ENCODE measurements at regions of chr11 and their contacts with region 1.

Region 1: DNA sequence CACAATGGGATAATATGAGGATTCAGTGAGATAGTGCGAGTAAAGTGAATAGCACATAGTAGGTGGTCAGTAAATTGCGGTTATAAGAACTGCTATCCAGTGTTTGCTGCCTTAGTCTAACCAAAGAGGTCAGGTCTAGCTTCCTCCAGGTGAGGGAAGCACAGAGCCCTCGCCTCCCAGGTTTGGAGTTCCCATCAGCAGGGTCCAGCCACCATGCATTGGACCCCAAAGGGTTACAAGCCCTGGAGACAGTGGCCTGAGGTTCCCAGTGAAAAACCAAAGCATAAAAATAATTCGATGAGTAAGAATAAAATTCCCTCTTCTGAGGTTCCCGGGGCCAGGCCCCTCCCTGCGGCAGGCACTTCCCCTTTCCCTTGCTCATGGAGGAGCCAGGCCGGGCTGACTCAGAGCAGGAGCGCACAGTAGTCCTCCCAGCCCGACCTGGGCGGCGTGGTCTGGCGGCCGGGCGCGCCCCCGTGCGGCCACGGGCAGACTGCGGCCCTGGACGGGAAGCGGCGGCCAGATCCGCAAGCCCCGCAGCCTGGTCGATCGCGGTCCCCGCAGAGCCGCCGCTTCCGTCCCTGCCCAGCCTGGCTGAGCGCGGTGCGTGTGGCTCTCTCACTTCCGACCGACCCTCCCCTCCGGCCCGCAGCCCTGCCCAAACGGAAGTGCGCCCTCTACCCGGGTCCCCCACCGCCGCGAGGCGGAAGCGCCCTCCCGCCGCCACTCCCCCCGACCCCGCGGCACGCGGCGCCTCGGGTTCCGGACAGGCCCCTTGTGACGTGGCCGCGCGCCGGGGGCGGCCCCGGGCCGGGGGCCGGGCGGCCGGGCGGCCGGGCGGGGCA is at the start of gene SLC39A13:
- H3K4me3 Mint-ChIP-seq: peak within 1 kb of the TSS; percentile 98
- H3K27ac Mint-ChIP-seq: peak within 1 kb of the TSS; percentile 92
- H3K4me1 Mint-ChIP-seq: peaks cover 53% of the 10 kb centered on the region
- H3K27me3 Mint-ChIP-seq: no peaks in the 10 kb centered on the region

Region 2: DNA sequence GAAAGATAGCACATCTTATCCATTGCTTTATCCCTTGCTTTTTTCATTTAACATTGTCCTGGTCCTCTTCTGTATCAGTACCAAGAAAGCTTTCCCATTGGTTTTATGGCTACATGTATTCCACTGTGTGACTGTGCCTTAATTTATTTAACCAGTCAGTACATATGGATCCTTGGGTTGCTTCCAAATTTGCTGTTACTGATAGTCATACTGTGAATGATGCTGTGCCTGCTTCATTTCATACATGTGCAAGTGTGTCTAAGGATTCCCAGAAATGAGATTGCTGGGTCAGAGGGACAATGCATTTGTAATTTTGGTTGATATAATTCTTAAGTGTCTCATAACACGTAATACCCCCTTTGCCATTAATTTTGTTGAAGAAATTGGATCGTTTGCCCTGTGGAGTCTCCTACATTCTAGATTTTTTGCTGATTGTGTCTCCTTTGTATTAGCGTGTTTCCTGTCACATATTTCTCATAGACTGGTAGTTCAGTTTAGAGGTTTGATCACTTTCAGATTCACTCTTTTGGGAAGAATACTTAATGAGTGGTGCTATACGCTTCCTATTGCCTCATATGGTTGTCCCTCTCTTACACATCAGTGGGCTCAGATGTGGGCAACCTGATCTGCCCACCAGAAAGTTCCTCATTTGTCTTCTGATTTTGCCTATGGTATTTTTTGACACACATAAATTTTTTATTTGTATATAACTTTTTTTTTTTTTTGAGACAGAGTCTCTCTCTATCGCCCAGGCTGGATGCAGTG is 90.7 kb before region 1 on chr11:
- intact Hi-C with region 1: loop called (anchors 10 kb)
- H3K4me3 Mint-ChIP-seq: no peak overlapping the region
- H3K27ac Mint-ChIP-seq: peak overlapping the region; percentile 28
- H3K4me1 Mint-ChIP-seq: peaks cover 15% of the 10 kb centered on the region
- H3K27me3 Mint-ChIP-seq: no peaks in the 10 kb centered on the region

Region 3: GRCh38 chr11:47373876-47374720 is 33.9 kb before region 1 on chr11:
- intact Hi-C with region 1: loop called (anchors 1 kb)
- H3K4me3 Mint-ChIP-seq: no peak overlapping the region
- H3K27ac Mint-ChIP-seq: no peak overlapping the region
- H3K4me1 Mint-ChIP-seq: peaks cover 70% of the 10 kb centered on the region
- H3K27me3 Mint-ChIP-seq: no peaks in the 10 kb centered on the region

Region 4: GRCh38 chr11:47394322-47395222 is 13.4 kb before region 1 on chr11:
- intact Hi-C with region 1: loop called (anchors 1 kb)
- H3K4me3 Mint-ChIP-seq: peak overlapping the region; percentile 77
- H3K27ac Mint-ChIP-seq: peak overlapping the region; percentile 100
- H3K4me1 Mint-ChIP-seq: peaks cover 83% of the 10 kb centered on the region
- H3K27me3 Mint-ChIP-seq: no peaks in the 10 kb centered on the region

Measured in dendritic cell treated with granulocyte-macrophage colony-stimulating factor and Interleukin-4, amounts not matched to agents 40 ng/mL and 50 ng/mL, for 4 days (primary cell).